Activated CD4-positive, alpha-beta memory T cell treated with anti-CD3 and anti-CD28 coated beads, Interleukin-2, amount 10 ng/mL, durations not matched to agents 7 days and 5 days (primary cell): ENCODE measurements at regions of chr3 and their contacts with region 1.

Region 1: GRCh38 chr3:114213627-114214541 is 23.5 kb downstream of the ZNF80 start:
- DNase-seq: peak; percentile 82
- H3K4me3 Mint-ChIP-seq: no peak overlapping the region
- H3K27ac Mint-ChIP-seq: no peak overlapping the region
- H3K4me1 Mint-ChIP-seq: peaks cover 17% of the 10 kb centered on the region
- H3K27me3 Mint-ChIP-seq: no peaks in the 10 kb centered on the region

Region 2: GRCh38 chr3:114152519-114153151 is 61.2 kb before region 1 on chr3:
- CTCF ChIA-PET with region 1: interaction called, 17 read pairs
- POLR2A ChIA-PET with region 1: interaction called, 4 read pairs
- DNase-seq: peak; percentile 83
- H3K4me3 Mint-ChIP-seq: peak overlapping the region; percentile 55
- H3K27ac Mint-ChIP-seq: no peak overlapping the region
- H3K4me1 Mint-ChIP-seq: peaks cover 11% of the 10 kb centered on the region
- H3K27me3 Mint-ChIP-seq: peaks cover 2% of the 10 kb centered on the region

Region 3: DNA sequence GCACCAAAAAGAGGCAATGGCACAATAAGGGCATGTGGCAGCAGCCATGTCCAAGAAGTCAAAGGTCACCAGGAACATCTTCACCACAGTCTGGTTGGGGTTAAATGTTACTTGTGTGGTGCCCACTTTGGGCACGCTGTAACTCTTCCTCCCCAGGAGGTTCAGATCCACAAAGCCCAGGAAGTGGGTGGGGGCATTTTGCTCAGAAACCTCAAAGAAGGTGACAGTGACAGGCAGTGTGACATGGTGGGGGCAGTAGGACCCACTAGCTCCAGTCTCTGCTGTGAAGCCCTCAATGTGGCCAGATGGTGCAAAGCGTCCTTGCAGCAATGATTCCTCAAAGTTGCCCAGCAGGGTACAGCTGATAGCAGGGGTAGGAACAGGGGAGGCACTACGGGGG is 17.7 kb after region 1 on chr3:
- CTCF ChIA-PET with region 1: interaction called, 6 read pairs
- POLR2A ChIA-PET with region 1: interaction called, 53 read pairs
- DNase-seq: peak; percentile 61
- H3K4me3 Mint-ChIP-seq: no peak overlapping the region
- H3K27ac Mint-ChIP-seq: peak overlapping the region; percentile 86
- H3K4me1 Mint-ChIP-seq: peaks cover 82% of the 10 kb centered on the region
- H3K27me3 Mint-ChIP-seq: no peaks in the 10 kb centered on the region

Region 4: GRCh38 chr3:114242947-114243346 is 29.1 kb after region 1 on chr3:
- CTCF ChIA-PET with region 1: interaction called, 3 read pairs
- POLR2A ChIA-PET with region 1: interaction called, 22 read pairs
- DNase-seq: peak; percentile 45
- H3K4me3 Mint-ChIP-seq: no peak overlapping the region
- H3K27ac Mint-ChIP-seq: peak overlapping the region; percentile 18
- H3K4me1 Mint-ChIP-seq: peaks cover 35% of the 10 kb centered on the region
- H3K27me3 Mint-ChIP-seq: no peaks in the 10 kb centered on the region

Region 5: DNA sequence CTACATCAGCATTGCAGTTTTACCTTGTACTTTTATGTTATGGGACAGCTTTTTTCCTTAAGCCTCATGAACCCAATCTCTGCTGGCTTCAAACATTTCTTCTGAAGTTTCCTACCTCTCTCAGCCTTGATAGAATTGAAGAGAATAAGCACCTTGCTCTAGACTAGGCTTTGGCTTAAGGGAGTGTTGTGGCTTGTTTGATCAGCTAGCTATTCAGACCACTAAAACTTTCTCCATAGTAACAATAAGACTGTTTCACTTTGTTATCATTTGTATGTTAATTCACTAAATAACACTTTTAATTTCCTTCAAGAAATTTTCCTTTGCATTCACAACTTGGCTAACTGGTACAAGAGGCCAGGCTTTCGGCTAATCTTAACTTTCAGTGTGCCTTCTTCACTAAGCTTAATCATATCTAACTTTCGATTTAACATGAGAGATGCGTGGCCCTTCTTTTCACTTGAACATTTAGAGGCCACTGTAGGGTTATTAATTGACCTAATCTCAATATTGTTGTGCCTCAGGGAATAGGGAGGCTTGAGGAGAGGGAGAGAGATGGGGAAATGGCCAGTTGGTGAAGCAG is 71.9 kb after region 1 on chr3:
- CTCF ChIA-PET with region 1: interaction called, 50 read pairs
- POLR2A ChIA-PET with region 1: interaction called, 133 read pairs
- DNase-seq: no peak
- H3K4me3 Mint-ChIP-seq: peak overlapping the region; percentile 54
- H3K27ac Mint-ChIP-seq: peak overlapping the region; percentile 69
- H3K4me1 Mint-ChIP-seq: peaks cover 21% of the 10 kb centered on the region
- H3K27me3 Mint-ChIP-seq: no peaks in the 10 kb centered on the region

Region 6: DNA sequence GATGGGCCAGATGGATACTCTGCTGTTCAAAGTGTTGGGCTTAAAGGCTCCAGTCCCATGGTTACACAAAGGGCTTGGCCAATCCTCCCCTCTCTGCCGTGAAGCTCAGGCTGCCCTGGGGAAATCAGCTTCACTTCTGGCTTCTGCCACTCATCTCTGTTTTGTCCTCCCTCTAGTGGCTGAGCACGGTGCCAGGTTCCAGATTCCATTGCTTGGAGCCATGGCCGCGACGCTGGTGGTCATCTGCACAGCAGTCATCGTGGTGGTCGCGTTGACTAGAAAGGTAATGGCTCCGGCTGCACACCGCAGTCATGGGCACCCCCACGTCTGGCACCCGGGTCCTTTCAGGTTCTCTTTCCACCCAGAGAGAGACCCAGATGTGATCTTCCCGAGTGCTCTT is 85.5 kb after region 1 on chr3:
- CTCF ChIA-PET with region 1: interaction called, 12 read pairs
- POLR2A ChIA-PET with region 1: interaction called, 133 read pairs
- DNase-seq: peak; percentile 37
- H3K4me3 Mint-ChIP-seq: no peak overlapping the region
- H3K27ac Mint-ChIP-seq: no peak overlapping the region
- H3K4me1 Mint-ChIP-seq: peaks cover 28% of the 10 kb centered on the region
- H3K27me3 Mint-ChIP-seq: no peaks in the 10 kb centered on the region

Region 7: GRCh38 chr3:114308830-114309229 is 94.9 kb after region 1 on chr3:
- CTCF ChIA-PET with region 1: interaction called, 7 read pairs
- POLR2A ChIA-PET with region 1: interaction called, 36 read pairs
- DNase-seq: peak; percentile 75
- H3K4me3 Mint-ChIP-seq: peak overlapping the region; percentile 51
- H3K27ac Mint-ChIP-seq: peak overlapping the region; percentile 90
- H3K4me1 Mint-ChIP-seq: peaks cover 52% of the 10 kb centered on the region
- H3K27me3 Mint-ChIP-seq: no peaks in the 10 kb centered on the region